Activated CD4-positive, alpha-beta memory T cell treated with anti-CD3 and anti-CD28 coated beads for 36 hours (primary cell): ENCODE measurements at regions of chr12 and their contacts with region 1.

Region 1: DNA sequence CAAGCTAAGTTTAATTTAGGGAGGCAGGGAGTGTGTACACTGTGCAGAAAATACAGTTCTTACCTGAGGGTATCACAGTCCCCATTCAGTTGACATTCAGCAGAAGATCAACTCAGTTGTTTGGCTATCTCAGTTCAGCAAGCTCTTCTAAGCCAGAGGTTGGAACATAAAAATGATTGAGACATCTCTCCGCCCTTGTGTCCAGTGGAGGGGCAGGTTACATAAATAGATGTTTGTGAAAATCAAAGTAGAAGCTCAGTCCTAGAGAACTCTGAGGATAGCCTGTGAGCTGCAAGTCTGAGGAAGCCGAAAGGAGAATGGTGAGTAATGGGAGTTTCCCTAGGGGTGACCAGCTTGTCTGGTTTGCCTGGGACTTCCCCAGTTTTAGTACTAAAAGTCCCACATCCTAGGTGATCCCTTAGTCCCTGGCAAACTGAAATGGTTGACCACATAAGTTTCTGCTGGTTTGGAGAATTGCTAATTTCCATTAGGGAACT is 251.4 kb upstream of the ATP2B1 start:
- DNase-seq: peak; percentile 57
- H3K4me3 Mint-ChIP-seq: no peak overlapping the region
- H3K27ac Mint-ChIP-seq: no peak overlapping the region
- H3K4me1 Mint-ChIP-seq: peaks cover 14% of the 10 kb centered on the region
- H3K27me3 Mint-ChIP-seq: no peaks in the 10 kb centered on the region

Region 2: DNA sequence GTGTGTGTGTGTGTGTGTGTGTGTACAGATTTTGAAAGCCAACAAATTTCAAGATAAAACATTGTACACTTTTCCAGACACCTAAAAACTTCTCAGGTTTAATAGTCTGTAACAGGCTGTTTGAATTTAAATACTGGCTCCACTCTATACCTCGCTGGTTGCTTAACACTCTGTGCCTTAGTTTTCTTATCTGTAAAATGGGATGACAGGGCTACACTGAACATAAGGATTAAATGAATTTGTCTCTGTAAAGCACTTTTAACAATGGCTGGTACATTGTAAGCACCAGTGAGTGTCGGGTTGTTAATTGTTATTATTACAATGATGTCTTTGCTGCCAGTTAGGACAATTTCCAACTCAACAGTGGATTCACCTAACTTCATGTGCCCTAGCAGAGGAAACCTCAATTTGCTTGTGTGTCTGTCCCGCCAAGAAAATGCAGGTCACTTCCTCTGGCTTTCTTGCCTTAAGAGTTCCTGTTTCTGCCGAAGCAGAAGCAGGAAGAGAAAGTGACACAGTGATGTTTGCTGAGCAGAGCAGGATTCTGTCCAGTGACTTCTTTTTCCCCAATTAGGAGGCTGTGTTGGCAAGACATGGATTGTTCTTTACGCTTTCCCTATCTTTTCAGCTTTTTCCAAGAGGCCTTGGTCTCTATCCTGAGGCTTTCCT is 97.4 kb before region 1 on chr12:
- CTCF ChIA-PET with region 1: no interaction called
- POLR2A ChIA-PET with region 1: no interaction called
- intact Hi-C with region 1: no loop called
- DNase-seq: peak; percentile 57
- H3K4me3 Mint-ChIP-seq: peak overlapping the region; percentile 66
- H3K27ac Mint-ChIP-seq: peak overlapping the region; percentile 95
- H3K4me1 Mint-ChIP-seq: peaks cover 67% of the 10 kb centered on the region
- H3K27me3 Mint-ChIP-seq: no peaks in the 10 kb centered on the region

Region 3: DNA sequence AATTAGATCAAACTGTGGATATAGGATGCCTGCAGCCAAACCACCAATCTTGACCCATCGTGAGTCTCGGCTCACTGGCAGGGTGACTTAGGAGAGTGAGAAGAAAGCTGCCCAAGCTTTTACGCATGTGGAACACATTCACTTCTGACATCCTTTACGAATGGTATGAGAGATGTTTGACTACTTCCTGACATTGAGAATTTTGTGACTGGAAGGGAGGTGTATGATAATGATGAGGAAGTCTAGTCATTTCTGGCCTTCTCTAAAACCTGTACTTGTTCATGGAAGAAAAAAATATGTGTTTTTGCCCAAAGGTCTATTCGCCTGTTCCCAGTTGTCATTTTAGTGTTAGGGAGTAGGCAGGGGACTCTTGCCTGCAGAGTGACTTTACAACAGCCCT is 24.2 kb before region 1 on chr12:
- CTCF ChIA-PET with region 1: no interaction called
- POLR2A ChIA-PET with region 1: no interaction called
- intact Hi-C with region 1: loop called (anchors 1 kb)
- DNase-seq: peak; percentile 28
- H3K4me3 Mint-ChIP-seq: peak overlapping the region; percentile 5
- H3K27ac Mint-ChIP-seq: peak overlapping the region; percentile 55
- H3K4me1 Mint-ChIP-seq: peaks cover 38% of the 10 kb centered on the region
- H3K27me3 Mint-ChIP-seq: no peaks in the 10 kb centered on the region